Activated CD8-positive, alpha-beta T cell treated with anti-CD3 and anti-CD28 coated beads, Interleukin-2, amount 10 ng/mL, durations not matched to agents 7 days and 5 days (primary cell): ENCODE measurements at regions of chr5 and their contacts with region 1.

Region 1: GRCh38 chr5:175478384-175479124 is at the start of gene SFXN1:
- DNase-seq: peak; percentile 85
- ATAC-seq: peak; percentile 76
- H3K4me3 Mint-ChIP-seq: peak within 1 kb of the TSS; percentile 94
- H3K27ac Mint-ChIP-seq: peak within 1 kb of the TSS; percentile 92
- H3K4me1 Mint-ChIP-seq: peaks cover 44% of the 10 kb centered on the region
- H3K27me3 Mint-ChIP-seq: peaks cover 8% of the 10 kb centered on the region
- total RNA-seq, gene SFXN1: 261 to 271 TPM

Region 2: GRCh38 chr5:175517818-175518450 is 39.4 kb after region 1 on chr5:
- CTCF ChIA-PET with region 1: interaction called, 8 read pairs
- POLR2A ChIA-PET with region 1: interaction called, 15 read pairs
- DNase-seq: peak; percentile 71
- ATAC-seq: peak; percentile 51
- H3K4me3 Mint-ChIP-seq: peak overlapping the region; percentile 8
- H3K27ac Mint-ChIP-seq: peak overlapping the region; percentile 88
- H3K4me1 Mint-ChIP-seq: peaks cover 89% of the 10 kb centered on the region
- H3K27me3 Mint-ChIP-seq: no peaks in the 10 kb centered on the region